T-cell (primary cell): ENCODE measurements at regions of chr11 and their contacts with region 1.

Region 1: DNA sequence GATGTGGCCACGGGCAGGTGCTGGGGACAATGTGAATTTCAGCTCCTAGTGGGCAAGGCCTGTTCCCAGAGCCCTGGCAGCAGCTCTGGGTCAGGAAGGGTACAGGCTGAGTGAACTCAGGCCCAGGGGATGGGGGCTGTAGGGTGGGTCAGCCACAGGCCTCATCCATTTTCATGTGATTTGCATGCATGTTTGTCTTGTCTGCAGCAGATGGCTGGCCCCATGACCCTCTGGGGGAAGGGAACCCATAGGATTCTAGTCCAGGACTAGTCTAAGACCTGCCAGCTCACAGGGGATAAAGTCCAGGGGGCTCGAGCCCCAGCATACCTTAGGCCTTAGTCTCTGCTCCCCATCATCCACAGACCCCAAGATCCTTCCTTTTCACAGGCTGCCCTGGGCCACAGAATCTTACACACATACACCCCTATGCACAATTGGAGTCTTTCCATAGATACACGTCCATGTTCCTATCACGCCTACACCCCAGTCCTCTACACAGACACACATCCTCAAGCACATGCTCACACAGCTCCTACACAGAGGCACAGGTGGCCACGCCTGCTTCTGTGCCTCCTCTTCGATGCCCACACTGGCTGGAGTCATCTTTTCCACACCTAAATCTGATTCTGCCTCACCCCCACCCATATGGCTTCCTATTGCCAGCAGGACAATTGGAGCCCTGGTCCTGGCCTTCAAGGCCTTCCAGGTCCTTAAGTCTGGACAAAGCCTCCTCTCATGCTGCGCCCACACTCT is 25.7 kb downstream of the PDE2A start:
- DNase-seq: no peak
- ATAC-seq: no peak
- H3K4me3 ChIP-seq: no peak overlapping the region
- H3K4me3 Mint-ChIP-seq: no peak overlapping the region
- H3K27ac ChIP-seq: no peak overlapping the region
- H3K27ac Mint-ChIP-seq: no peak overlapping the region
- H3K4me1 ChIP-seq: peaks cover 0 to under 1% of the 10 kb centered on the region in 2 experiments
- H3K4me1 Mint-ChIP-seq: peaks cover 0 to 2% (median 0%) of the 10 kb centered on the region in 3 donors
- H3K27me3 ChIP-seq: peaks cover 0 to 6% of the 10 kb centered on the region in 2 experiments
- H3K27me3 Mint-ChIP-seq: peaks cover 6% of the 10 kb centered on the region in 2 donors

Region 2: GRCh38 chr11:72658989-72659640 is 10.6 kb after region 1 on chr11:
- CTCF ChIA-PET with region 1: no interaction called
- POLR2A ChIA-PET with region 1: no interaction called
- DNase-seq: no peak
- ATAC-seq: no peak
- H3K4me3 ChIP-seq: no peak overlapping the region
- H3K4me3 Mint-ChIP-seq: no peak overlapping the region
- H3K27ac ChIP-seq: no peak overlapping the region
- H3K27ac Mint-ChIP-seq: no peak overlapping the region
- H3K4me1 ChIP-seq: no peaks in the 10 kb centered on the region
- H3K4me1 Mint-ChIP-seq: no peaks in the 10 kb centered on the region
- H3K27me3 ChIP-seq: peaks cover 0 to 35% of the 10 kb centered on the region in 2 experiments
- H3K27me3 Mint-ChIP-seq: peaks cover 9 to 14% of the 10 kb centered on the region in 2 donors

Region 3: GRCh38 chr11:72673943-72674828 is 25.6 kb after region 1 on chr11 and contains the start of gene PDE2A:
- CTCF ChIA-PET with region 1: no interaction called
- POLR2A ChIA-PET with region 1: no interaction called
- DNase-seq: no peak
- ATAC-seq: no peak
- H3K4me3 ChIP-seq: no peak within 1 kb of the TSS
- H3K4me3 Mint-ChIP-seq: no peak within 1 kb of the TSS
- H3K27ac ChIP-seq: no peak within 1 kb of the TSS
- H3K27ac Mint-ChIP-seq: peak within 1 kb of the TSS in 1 of 2 donors; percentile 13
- H3K4me1 ChIP-seq: peaks cover 0 to 15% of the 10 kb centered on the region in 2 experiments
- H3K4me1 Mint-ChIP-seq: peaks cover 11 to 13% (median 12%) of the 10 kb centered on the region in 3 donors
- H3K27me3 ChIP-seq: peaks cover 8 to 94% of the 10 kb centered on the region in 2 experiments
- H3K27me3 Mint-ChIP-seq: peaks cover 17 to 75% of the 10 kb centered on the region in 2 donors
- total RNA-seq, gene PDE2A: 1.1 to 6.1 (median 1.7) TPM

Region 4: GRCh38 chr11:72709478-72710238 is 61.1 kb after region 1 on chr11:
- CTCF ChIA-PET with region 1: no interaction called
- POLR2A ChIA-PET with region 1: interaction called in 1 of 2 experiments, 11 read pairs
- DNase-seq: no peak
- ATAC-seq: no peak
- H3K4me3 ChIP-seq: no peak overlapping the region
- H3K4me3 Mint-ChIP-seq: no peak overlapping the region
- H3K27ac ChIP-seq: no peak overlapping the region
- H3K27ac Mint-ChIP-seq: peak overlapping the region in 1 of 2 donors; percentile 69
- H3K4me1 ChIP-seq: peaks cover 0 to 7% of the 10 kb centered on the region in 2 experiments
- H3K4me1 Mint-ChIP-seq: peaks cover 9 to 15% (median 12%) of the 10 kb centered on the region in 3 donors
- H3K27me3 ChIP-seq: no peaks in the 10 kb centered on the region
- H3K27me3 Mint-ChIP-seq: no peaks in the 10 kb centered on the region

Region 5: DNA sequence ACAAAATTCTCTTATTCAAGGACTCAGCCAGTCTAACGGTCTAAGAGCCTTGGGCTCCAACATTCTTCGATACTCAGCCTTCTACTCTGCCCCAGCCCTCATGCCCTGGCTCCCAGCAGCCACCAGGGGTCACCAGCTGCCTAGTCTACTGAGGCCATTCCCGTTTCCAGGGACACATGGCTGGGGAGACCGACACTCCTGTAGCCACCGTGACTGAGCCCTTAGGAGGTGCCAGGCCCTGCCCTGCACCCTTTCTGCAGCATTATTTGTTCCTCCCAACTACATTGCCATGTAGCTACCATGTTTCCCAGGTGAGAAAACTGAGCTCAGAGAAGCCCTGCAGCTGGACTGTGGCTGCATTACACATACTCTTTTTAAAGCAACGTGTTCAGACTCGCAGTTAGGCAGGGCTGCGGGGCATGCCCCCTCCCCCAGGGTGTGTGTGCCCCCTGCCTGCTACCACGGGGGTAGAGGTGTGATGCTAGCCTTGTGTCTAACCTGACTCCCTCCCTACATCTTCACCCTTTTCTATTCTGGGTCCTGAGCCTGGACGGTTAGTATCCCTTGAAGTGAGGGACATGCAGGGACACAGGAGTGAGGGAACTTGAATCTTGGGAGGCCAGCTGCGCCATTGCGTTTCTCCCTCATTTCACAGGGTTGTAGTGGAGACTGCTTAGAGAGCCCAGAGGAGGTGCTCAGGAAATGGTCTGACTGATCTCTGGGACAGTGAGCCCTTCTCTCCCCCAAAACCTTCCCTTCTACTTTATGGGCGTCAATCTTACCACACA is 183.1 kb after region 1 on chr11:
- CTCF ChIA-PET with region 1: no interaction called
- POLR2A ChIA-PET with region 1: no interaction called
- DNase-seq: peak in 30 of 35 experiments; percentile 25 to 70 (median 48)
- ATAC-seq: peak; percentile 66 to 78 (median 68)
- H3K4me3 ChIP-seq: no peak overlapping the region
- H3K4me3 Mint-ChIP-seq: no peak overlapping the region
- H3K27ac ChIP-seq: no peak overlapping the region
- H3K27ac Mint-ChIP-seq: peak overlapping the region; percentile 55 to 73
- H3K4me1 ChIP-seq: peaks cover 0 to 15% of the 10 kb centered on the region in 2 experiments
- H3K4me1 Mint-ChIP-seq: peaks cover 0 to 21% (median 8%) of the 10 kb centered on the region in 3 donors
- H3K27me3 ChIP-seq: no peaks in the 10 kb centered on the region
- H3K27me3 Mint-ChIP-seq: no peaks in the 10 kb centered on the region